Left lung (tissue), 14 donors: ENCODE measurements at regions of chr10 and their contacts with region 1.

Region 1: DNA sequence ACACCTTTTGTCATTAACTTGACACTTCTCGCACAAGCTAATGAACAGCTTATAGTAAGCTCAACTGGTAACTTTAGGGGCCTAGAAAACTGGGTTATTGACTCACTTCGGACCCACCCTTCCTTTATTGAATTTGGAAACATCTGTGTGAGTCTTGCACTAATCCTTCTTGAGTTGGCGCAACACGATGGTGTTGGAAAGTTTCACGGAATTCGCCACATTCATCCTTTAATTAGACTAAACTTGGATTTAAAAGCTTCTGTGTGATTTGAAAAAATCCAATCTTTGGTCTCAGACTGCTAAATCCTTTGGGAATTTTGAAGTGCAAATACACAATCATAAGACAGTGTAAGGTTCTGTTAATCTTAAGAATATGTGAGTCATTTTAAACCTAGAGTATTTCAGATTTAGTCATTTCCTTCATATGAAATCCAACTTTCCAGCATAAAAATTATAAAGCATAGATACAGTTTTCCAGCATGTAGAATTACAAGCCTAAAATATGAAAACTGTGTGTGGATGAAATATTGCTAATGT is 15.1 kb downstream of the FZD8 start:
- DNase-seq: no peak
- ATAC-seq: no peak
- H3K4me3 ChIP-seq: no peak overlapping the region
- H3K27ac ChIP-seq: no peak overlapping the region
- H3K4me1 ChIP-seq: no peaks in the 10 kb centered on the region
- H3K27me3 ChIP-seq: no peaks in the 10 kb centered on the region
- CTCF ChIP-seq: no peak

Region 2: DNA sequence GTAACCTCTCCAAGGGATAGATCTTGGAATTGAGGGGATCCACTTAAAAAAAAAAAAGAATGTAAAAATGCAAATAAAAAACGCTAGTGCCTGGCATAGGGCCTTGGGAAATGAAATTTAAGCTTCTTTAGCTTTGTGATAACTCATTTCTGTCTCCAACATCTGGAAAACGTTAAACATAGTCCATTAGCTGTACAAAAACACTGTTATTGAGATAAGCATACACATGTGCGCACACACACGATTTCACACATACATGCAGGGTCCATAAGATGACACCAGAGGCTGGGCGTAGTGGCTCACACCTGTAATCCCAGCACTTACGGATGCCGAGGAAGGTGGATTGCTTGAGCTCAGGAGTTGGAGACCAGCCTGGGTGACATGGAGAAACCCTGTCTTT is 523.2 kb before region 1 on chr10:
- intact Hi-C with region 1: no loop called
- DNase-seq: peak in 2 of 4 donors; percentile 73 to 76
- ATAC-seq: no peak
- H3K4me3 ChIP-seq: no peak overlapping the region
- H3K27ac ChIP-seq: no peak overlapping the region
- H3K4me1 ChIP-seq: no peaks in the 10 kb centered on the region
- H3K27me3 ChIP-seq: no peaks in the 10 kb centered on the region
- CTCF ChIP-seq: no peak

Region 3: GRCh38 chr10:35495521-35496119 is 131.4 kb before region 1 on chr10:
- intact Hi-C with region 1: no loop called
- DNase-seq: no peak
- ATAC-seq: peak; percentile 59
- H3K4me3 ChIP-seq: no peak overlapping the region
- H3K27ac ChIP-seq: peak overlapping the region in 1 of 2 donors; percentile 13
- H3K4me1 ChIP-seq: peaks cover 8 to 30% of the 10 kb centered on the region in 2 donors
- H3K27me3 ChIP-seq: no peaks in the 10 kb centered on the region
- CTCF ChIP-seq: no peak

Region 4: GRCh38 chr10:36977449-36977848 is 1350.4 kb after region 1 on chr10:
- intact Hi-C with region 1: loop called in 1 of 2 experiments (anchors 10 kb)
- DNase-seq: no peak
- ATAC-seq: no peak
- H3K4me3 ChIP-seq: no peak overlapping the region
- H3K27ac ChIP-seq: no peak overlapping the region
- H3K4me1 ChIP-seq: no peaks in the 10 kb centered on the region
- H3K27me3 ChIP-seq: no peaks in the 10 kb centered on the region
- CTCF ChIP-seq: no peak